Mucosa of descending colon (tissue), 3 donors: ENCODE measurements at regions of chr5 and their contacts with region 1.

Region 1: GRCh38 chr5:120270498-120270897 is 193.6 kb upstream of the PRR16 start:
- DNase-seq: no peak
- ATAC-seq: no peak
- H3K4me3 ChIP-seq: no peak overlapping the region
- H3K4me1 ChIP-seq: no peaks in the 10 kb centered on the region
- CTCF ChIP-seq: no peak

Region 2: DNA sequence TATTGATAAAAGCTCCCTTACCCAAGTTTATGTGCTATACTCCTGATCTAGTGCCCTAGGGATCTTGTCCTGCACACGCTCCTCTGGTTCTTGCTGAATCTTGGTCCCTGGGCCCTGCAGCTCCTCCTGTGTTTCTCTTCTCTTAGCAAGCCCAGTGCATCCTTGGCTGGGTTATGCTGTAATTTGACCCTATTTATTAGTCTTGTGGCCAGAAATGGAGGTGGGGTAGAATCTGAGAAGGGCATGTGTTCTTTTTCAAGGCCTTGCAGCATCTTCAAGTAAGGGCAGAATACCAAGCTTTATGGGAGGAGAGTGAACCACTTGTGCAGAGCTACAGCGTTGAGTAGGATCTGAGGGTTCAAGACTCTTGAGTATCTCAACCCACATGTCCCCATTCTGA is 274.4 kb before region 1 on chr5:
- intact Hi-C with region 1: no loop called
- DNase-seq: no peak
- ATAC-seq: no peak
- H3K4me3 ChIP-seq: no peak overlapping the region
- H3K4me1 ChIP-seq: no peaks in the 10 kb centered on the region
- CTCF ChIP-seq: no peak

Region 3: GRCh38 chr5:120354126-120354525 is 83.6 kb after region 1 on chr5:
- intact Hi-C with region 1: loop called in 1 of 2 experiments (anchors 5 kb)
- DNase-seq: no peak
- ATAC-seq: no peak
- H3K4me3 ChIP-seq: no peak overlapping the region
- H3K4me1 ChIP-seq: no peaks in the 10 kb centered on the region
- CTCF ChIP-seq: no peak

Region 4: GRCh38 chr5:120372899-120373298 is 102.4 kb after region 1 on chr5:
- intact Hi-C with region 1: no loop called
- DNase-seq: no peak
- ATAC-seq: no peak
- H3K4me3 ChIP-seq: no peak overlapping the region
- H3K4me1 ChIP-seq: peaks cover 6% of the 10 kb centered on the region
- CTCF ChIP-seq: no peak

Region 5: DNA sequence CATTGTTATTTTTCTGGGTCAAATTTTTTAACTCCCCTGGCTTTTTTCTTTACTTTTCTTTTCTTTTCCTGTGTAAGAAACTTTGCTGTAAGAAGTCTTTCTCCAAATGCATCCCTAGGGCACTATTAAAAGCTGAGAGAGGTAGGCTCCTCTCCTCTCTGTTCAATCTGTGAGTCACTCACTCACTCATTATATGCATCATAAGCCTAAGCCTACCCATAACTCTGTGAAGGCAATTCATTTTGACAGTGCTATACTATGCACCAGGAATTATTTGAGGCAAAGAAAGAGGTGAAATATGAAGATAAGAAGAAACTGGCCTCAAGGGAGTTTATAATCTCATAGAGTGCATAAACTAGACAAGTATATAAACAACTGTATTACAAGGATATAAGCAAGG is 125.7 kb after region 1 on chr5:
- intact Hi-C with region 1: no loop called
- DNase-seq: no peak
- ATAC-seq: no peak
- H3K4me3 ChIP-seq: no peak overlapping the region
- H3K4me1 ChIP-seq: no peaks in the 10 kb centered on the region
- CTCF ChIP-seq: no peak